ENCODE measurements at regions of chr3 and their contacts with region 1.

Region 1: DNA sequence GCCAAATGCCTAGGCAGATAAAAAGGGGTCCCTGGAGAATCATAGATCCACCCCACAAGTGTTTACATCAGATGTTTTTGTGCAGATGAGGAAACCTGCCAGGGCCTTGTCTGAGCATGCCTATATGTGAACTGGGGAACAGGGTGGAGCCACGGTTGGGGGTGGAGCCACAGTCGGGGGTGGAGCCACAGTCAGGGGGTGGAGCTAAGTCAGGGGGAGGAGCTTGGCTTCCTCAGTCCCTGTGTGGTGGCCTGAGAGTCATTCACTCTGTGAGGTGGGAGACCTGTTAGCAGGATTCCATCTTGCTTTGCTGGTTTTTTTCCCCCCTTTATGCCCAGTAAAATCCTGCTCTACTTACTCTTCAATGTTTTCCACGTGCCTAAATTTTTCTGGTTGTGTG is 57.8 kb upstream of the TGFBR2 start:
- DNase-seq: no peak
- ATAC-seq: peak in 1 of 8 donors; percentile 34
- H3K4me3 ChIP-seq: no peak overlapping the region
- H3K27ac ChIP-seq: peak overlapping the region in 4 of 10 donors; percentile 51 to 72 (median 60)
- H3K4me1 ChIP-seq: peaks cover 0 to 41% (median 7%) of the 10 kb centered on the region in 9 donors
- H3K27me3 ChIP-seq: no peaks in the 10 kb centered on the region
- CTCF ChIP-seq: no peak

Region 2: GRCh38 chr3:30672959-30673358 is 124.4 kb after region 1 on chr3:
- intact Hi-C with region 1: loop called in 1 of 10 experiments (anchors 10 kb)
- DNase-seq: no peak
- ATAC-seq: peak in 6 of 8 donors; percentile 31 to 84 (median 42)
- H3K4me3 ChIP-seq: no peak overlapping the region
- H3K27ac ChIP-seq: peak overlapping the region in 4 of 10 donors; percentile 4 to 59 (median 20)
- H3K4me1 ChIP-seq: peaks cover 8 to 75% (median 52%) of the 10 kb centered on the region in 9 donors
- H3K27me3 ChIP-seq: no peaks in the 10 kb centered on the region
- CTCF ChIP-seq: no peak